Activated naive CD4-positive, alpha-beta T cell treated with anti-CD3 and anti-CD28 coated beads for 36 hours (primary cell): ENCODE measurements at regions of chr4 and their contacts with region 1.

Region 1: DNA sequence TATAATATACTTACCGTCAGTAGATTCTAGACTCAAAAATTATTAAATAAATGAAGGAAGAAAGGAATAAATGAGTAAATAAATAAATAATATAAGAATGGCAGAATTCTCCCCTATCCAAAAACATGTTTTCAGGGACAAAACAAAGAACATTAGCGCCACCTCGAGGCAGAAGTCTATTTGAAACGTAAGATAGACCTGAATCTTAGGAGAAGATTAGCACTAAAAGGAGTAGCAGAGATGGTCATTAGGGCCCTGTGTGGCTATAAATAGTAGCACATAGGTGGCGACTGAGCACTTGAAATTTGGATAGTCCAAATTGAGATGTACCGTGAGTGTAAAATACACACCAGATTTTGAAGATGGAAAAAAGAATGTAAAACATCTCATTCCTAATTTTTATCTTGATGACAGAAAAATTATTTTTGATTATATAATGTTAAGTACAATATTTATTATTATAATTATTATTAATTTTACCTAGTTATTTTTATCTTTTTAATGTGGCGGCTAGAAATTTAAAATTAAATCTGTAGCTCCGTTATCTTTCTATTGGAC is 24.3 kb upstream of the SRD5A3 start:
- DNase-seq: peak; percentile 93
- H3K4me3 Mint-ChIP-seq: no peak overlapping the region
- H3K27ac Mint-ChIP-seq: no peak overlapping the region
- H3K4me1 Mint-ChIP-seq: peaks cover 52% of the 10 kb centered on the region
- H3K27me3 Mint-ChIP-seq: no peaks in the 10 kb centered on the region

Region 2: GRCh38 chr4:54683616-54684346 is 638.0 kb before region 1 on chr4:
- CTCF ChIA-PET with region 1: interaction called, 4 read pairs
- intact Hi-C with region 1: loop called (anchors 2 kb)
- DNase-seq: peak; percentile 81
- H3K4me3 Mint-ChIP-seq: no peak overlapping the region
- H3K27ac Mint-ChIP-seq: no peak overlapping the region
- H3K4me1 Mint-ChIP-seq: peaks cover 20% of the 10 kb centered on the region
- H3K27me3 Mint-ChIP-seq: no peaks in the 10 kb centered on the region

Region 3: DNA sequence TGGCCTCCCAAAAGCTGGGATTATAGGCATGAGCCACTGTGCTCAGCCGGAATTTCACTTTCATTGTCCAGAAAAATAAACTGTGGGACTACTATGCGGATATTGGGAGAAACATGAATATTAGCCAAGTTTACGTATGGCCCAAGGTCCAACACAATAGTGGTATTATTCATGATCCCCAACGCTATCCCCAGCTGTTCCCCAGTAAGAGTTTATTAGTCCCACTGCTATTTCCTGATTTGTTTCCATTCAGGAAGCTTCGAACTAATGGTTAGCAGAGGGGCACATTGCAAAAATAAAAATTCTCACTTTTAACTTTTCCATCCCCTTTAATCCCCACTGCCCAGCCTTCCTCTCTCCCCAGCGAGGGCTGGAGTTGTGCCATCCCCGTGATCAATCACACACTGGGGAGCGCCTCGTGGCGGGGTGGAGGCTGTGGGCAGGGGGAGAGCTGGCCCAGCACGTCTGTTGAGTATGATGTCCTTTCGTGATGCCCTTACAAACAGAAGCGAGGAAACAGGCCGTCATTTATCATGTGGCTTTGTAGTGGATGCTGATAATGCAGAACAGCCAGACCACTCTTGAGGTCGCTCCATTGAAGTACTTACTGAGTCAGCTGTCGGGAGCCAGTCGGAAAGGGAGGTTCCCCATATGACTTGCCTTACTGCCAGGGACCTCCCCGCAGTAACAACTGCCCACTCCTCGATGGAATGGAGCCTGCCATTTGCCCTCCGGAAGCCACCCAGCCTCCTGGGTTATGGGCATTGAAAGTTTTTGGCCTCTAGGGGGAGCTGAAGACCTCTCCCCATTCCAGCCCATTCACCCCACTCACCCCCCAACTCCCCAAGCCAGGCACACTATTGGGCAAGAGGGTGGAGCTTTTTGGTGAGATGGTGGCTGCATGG is 313.4 kb before region 1 on chr4:
- CTCF ChIA-PET with region 1: no interaction called
- intact Hi-C with region 1: loop called (anchors 10 kb)
- DNase-seq: peak; percentile 6
- H3K4me3 Mint-ChIP-seq: no peak overlapping the region
- H3K27ac Mint-ChIP-seq: no peak overlapping the region
- H3K4me1 Mint-ChIP-seq: no peaks in the 10 kb centered on the region
- H3K27me3 Mint-ChIP-seq: peaks cover 5% of the 10 kb centered on the region

Region 4: DNA sequence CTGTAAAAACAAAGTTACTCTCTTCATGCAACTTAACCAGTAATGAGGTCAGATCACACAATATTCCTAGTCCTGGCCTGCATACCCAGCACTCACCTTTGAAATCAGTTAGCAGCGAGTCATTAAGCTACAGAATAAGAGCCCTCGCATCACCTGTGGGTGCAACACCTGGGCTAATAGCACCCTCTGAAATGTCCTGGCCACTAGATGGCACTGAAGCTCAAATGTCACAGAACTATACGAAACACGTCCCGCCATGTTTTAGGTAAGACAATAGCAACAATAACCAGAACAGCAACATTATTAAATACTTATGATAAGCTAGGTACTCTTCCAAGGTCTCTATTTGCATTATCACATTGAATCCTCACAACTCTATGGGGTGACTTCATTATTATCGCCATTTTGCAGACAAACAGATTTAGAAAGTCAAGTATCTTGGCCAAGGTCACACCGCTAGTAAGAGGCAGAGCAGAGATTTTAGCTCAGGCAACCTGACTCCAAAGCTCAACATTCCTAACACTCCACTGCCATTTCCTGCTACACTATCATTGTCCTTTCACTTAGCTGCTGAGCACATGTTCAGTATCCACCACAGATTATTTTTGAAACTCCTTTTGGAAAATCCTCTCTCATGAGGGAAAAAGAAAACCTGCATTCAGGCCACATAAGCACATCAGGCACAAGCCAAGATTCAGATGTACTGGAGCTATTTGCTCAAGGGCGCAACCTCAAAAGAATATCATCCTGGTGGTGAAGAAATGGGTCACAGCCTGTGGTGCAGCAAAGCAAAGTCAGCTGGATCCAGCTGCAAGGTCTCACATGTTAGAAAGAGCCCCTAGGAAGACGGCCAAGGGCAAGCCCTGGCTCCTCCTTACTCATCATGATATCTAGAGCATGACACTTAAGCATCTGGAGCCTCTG is 136.9 kb before region 1 on chr4:
- CTCF ChIA-PET with region 1: interaction called, 34 read pairs
- intact Hi-C with region 1: loop called (anchors 1 kb)
- DNase-seq: peak; percentile 54
- H3K4me3 Mint-ChIP-seq: no peak overlapping the region
- H3K27ac Mint-ChIP-seq: no peak overlapping the region
- H3K4me1 Mint-ChIP-seq: no peaks in the 10 kb centered on the region
- H3K27me3 Mint-ChIP-seq: no peaks in the 10 kb centered on the region

Region 5: DNA sequence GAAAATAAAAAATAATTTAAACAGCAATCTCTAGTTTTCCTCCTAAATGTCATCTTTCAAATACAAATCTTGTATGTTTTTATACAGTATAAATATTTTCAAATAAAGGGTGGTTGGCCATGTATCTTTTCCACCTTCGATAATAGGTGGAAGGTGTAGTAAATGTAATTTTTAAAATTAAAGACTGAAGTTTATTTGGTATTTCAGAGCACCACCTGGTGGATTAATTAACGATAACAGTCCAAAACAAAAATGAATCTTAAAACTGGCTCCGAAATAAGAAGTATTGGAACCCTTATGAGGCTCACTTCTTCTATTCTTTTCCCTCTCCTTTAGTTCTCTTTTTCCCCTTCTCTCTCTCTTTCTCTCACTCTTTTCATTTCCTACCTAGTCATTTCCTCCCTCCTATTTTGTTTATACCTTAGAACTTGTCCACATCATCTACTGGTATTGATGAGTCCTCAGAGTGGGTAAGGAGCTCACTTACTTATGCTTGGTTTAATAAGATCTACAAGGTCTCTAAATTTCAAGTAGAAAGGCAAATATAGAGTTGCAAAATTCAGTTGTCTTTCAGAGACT is 414.9 kb after region 1 on chr4:
- CTCF ChIA-PET with region 1: no interaction called
- intact Hi-C with region 1: loop called (anchors 2 kb)
- DNase-seq: no peak
- H3K4me3 Mint-ChIP-seq: no peak overlapping the region
- H3K27ac Mint-ChIP-seq: no peak overlapping the region
- H3K4me1 Mint-ChIP-seq: no peaks in the 10 kb centered on the region
- H3K27me3 Mint-ChIP-seq: peaks cover 34% of the 10 kb centered on the region